A673 (cell line): ENCODE measurements at regions of chr2 and their contacts with region 1.

Region 1: DNA sequence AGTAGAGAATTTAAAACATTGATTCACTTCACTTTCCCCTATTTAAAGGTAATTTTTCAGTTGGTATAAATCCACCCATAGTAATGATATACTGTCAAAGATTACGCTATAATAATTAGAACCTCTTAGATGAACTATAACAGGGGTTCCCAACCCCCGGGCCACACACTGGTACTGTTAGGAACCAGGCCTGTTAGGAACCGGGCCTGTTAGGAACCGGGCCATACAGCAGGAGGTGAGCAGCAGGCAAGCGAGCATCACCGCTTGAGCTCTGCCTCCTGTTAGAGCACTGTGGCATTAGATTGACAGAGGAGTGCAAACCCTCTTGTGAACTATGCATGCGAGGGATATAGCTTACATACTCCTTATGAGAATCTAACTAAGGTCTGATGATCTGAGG is 34.0 kb upstream of the CD302 start:
- DNase-seq: no peak
- H3K4me3 ChIP-seq: no peak overlapping the region
- H3K27ac ChIP-seq: no peak overlapping the region
- H3K4me1 ChIP-seq: no peaks in the 10 kb centered on the region
- H3K27me3 ChIP-seq: no peaks in the 10 kb centered on the region
- CTCF ChIP-seq: no peak

Region 2: DNA sequence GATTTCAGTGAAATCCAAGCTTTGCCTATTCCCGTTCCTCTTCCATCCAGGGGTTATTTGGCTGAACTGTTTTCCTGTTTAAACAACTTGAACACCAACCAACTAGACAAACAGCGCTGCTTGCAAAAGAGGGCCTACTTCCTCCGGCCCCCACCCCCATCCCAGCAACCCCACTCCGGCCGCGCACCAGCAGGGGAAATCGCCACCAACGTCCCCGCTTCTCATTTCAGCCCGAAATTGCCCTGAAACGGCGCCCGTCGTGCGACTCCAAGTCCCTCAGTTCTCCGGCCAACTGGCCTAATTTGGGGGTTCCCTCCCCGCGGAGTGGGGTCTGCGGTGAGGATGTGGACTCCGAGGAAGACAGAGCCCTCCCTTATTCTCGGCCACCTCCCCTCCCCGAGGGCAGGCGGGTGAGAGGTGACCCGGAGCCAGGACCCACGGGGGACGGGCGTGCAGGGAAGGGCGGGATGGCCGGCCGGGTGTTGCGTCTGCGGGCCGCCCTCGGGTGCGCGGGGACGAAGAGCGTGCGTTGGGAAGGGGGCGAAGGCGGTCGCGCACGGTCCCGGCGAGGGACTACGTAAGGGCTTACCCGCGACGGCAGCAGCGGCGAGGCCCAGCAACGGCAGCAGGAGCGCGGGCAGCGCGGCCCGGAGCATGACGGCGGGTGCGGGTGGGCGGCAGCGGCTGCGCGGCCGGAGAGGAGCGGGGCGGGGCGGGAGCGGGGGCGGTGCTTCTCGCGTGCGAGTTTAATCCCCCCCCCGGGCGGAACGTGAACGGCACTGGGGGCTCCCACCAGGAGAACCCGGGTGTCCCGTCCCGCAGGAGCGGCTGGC is 34.3 kb before region 1 on chr2 and contains the start of gene CD302:
- CTCF ChIA-PET with region 1: no interaction called
- POLR2A ChIA-PET with region 1: interaction called, 32 read pairs
- intact Hi-C with region 1: no loop called
- DNase-seq: peak; percentile 38
- H3K4me3 ChIP-seq: peak within 1 kb of the TSS; percentile 44
- H3K27ac ChIP-seq: no peak within 1 kb of the TSS
- H3K4me1 ChIP-seq: peaks cover 11% of the 10 kb centered on the region
- H3K27me3 ChIP-seq: peaks cover 36% of the 10 kb centered on the region
- CTCF ChIP-seq: no peak
- total RNA-seq, gene CD302: 0.24 and 0.31 TPM in 2 replicates